Natural killer cell (primary cell): ENCODE measurements at regions of chr16 and their contacts with region 1.

Region 1: GRCh38 chr16:72066747-72067146 is 3.7 kb downstream of the HPR start:
- DNase-seq: peak in 1 of 2 donors; percentile 58
- ATAC-seq: peak in 2 of 3 donors; percentile 36 to 47
- H3K4me3 ChIP-seq: no peak overlapping the region
- H3K4me3 Mint-ChIP-seq: no peak overlapping the region
- H3K27ac ChIP-seq: no peak overlapping the region
- H3K27ac Mint-ChIP-seq: no peak overlapping the region
- H3K4me1 ChIP-seq: no peaks in the 10 kb centered on the region
- H3K4me1 Mint-ChIP-seq: no peaks in the 10 kb centered on the region
- H3K27me3 ChIP-seq: no peaks in the 10 kb centered on the region
- H3K27me3 Mint-ChIP-seq: no peaks in the 10 kb centered on the region
- CTCF ChIP-seq: peak; percentile 60

Region 2: GRCh38 chr16:71853413-71853812 is 213.3 kb before region 1 on chr16:
- intact Hi-C with region 1: no loop called
- DNase-seq: no peak
- ATAC-seq: no peak
- H3K4me3 ChIP-seq: no peak overlapping the region
- H3K4me3 Mint-ChIP-seq: no peak overlapping the region
- H3K27ac ChIP-seq: no peak overlapping the region
- H3K27ac Mint-ChIP-seq: peak overlapping the region in 1 of 2 donors; percentile 36
- H3K4me1 ChIP-seq: peaks cover 25% of the 10 kb centered on the region
- H3K4me1 Mint-ChIP-seq: peaks cover 39 to 65% of the 10 kb centered on the region in 2 donors
- H3K27me3 ChIP-seq: no peaks in the 10 kb centered on the region
- H3K27me3 Mint-ChIP-seq: no peaks in the 10 kb centered on the region
- CTCF ChIP-seq: no peak

Region 3: DNA sequence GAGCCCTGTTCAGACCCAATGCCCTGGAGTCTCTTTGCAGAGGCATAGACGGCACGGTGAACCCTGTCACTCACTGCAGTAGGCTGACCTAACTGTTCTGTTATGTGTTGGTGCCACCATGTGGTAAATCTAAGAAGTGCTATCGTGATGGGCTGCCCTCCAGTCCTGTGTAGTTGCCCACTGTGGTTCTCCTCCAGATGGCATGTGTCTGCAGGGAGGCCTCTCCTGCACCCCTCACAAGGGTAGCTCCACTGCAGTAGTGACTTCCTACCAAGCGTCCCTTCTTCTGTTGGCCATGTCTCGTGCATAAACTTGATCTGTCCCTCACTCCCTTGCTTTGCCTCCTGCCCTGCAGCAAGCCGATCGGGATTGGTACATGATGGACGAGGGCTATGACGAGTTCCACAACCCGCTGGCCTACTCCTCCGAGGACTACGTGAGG is 32.7 kb after region 1 on chr16:
- intact Hi-C with region 1: loop called (anchors 1 kb)
- DNase-seq: peak in 1 of 2 donors; percentile 69
- ATAC-seq: peak; percentile 79 to 95 (median 88)
- H3K4me3 ChIP-seq: no peak overlapping the region
- H3K4me3 Mint-ChIP-seq: no peak overlapping the region
- H3K27ac ChIP-seq: no peak overlapping the region
- H3K27ac Mint-ChIP-seq: no peak overlapping the region
- H3K4me1 ChIP-seq: peaks cover 6% of the 10 kb centered on the region
- H3K4me1 Mint-ChIP-seq: peaks cover 30 to 36% of the 10 kb centered on the region in 2 donors
- H3K27me3 ChIP-seq: no peaks in the 10 kb centered on the region
- H3K27me3 Mint-ChIP-seq: no peaks in the 10 kb centered on the region
- CTCF ChIP-seq: peak; percentile 48